ENCODE measurements at regions of chr22 and their contacts with region 1.

Region 1: DNA sequence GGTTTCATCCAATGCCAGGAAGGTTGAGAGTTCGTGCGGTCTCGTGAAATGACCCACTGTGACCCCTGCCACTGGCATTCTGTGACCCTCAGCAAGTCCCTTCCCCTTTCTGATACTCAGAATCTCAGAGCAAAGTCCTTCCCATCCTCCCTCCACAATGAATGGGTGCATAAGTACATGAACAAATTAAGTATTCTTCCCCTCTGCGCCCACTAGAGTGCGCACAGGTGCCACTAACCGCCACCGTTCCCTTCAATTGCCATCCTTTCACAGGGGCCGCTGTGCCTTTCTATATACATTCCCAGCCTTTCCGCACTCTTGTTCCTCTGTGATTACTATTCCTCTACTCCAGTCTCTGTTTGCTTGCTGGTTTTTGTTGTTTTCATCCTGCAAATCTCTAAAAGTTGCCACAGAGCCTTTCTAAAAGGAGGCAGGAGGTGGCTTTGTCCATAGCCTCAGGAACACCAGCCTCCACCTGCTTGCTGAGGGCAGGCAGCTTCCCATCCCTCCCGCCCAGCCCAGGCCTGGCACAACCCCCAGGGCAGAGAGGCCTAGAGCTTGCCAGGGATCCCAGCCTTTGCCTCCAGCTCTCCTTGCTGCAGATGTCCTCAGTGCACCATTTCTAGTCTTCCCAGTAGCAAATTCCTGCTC is 6.7 kb upstream of the AP1B1 start:
- DNase-seq: peak; percentile 79 to 84
- ATAC-seq: peak; percentile 86
- H3K4me3 ChIP-seq: no peak overlapping the region
- H3K27ac ChIP-seq: no peak overlapping the region
- H3K4me1 ChIP-seq: no peaks in the 10 kb centered on the region
- H3K27me3 ChIP-seq: no peaks in the 10 kb centered on the region

Region 2: DNA sequence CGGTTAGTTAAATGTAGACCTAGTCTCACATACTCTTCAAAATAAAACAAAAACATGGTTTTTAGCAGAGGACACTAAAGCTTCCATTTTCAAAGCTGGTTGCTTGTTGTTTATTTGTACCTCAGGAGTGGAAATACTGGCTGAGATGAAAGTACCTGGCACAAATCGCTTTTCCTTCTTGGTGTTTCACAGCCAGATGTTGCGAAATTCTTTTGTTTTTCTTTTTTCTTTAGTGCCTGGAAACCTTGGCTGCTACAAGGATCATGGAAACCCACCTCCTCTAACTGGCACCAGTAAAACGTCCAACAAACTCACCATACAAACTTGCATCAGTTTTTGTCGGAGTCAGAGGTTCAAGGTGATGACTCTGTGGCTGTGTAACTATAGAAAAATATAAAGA is 273.9 kb before region 1 on chr22:
- intact Hi-C with region 1: no loop called
- DNase-seq: no peak
- ATAC-seq: no peak
- H3K4me3 ChIP-seq: no peak overlapping the region
- H3K27ac ChIP-seq: no peak overlapping the region
- H3K4me1 ChIP-seq: no peaks in the 10 kb centered on the region
- H3K27me3 ChIP-seq: no peaks in the 10 kb centered on the region

Region 3: GRCh38 chr22:29330753-29331152 is 64.3 kb before region 1 on chr22:
- intact Hi-C with region 1: no loop called
- DNase-seq: peak; percentile 71 to 79
- ATAC-seq: no peak
- H3K4me3 ChIP-seq: no peak overlapping the region
- H3K27ac ChIP-seq: no peak overlapping the region
- H3K4me1 ChIP-seq: no peaks in the 10 kb centered on the region
- H3K27me3 ChIP-seq: no peaks in the 10 kb centered on the region

Region 4: DNA sequence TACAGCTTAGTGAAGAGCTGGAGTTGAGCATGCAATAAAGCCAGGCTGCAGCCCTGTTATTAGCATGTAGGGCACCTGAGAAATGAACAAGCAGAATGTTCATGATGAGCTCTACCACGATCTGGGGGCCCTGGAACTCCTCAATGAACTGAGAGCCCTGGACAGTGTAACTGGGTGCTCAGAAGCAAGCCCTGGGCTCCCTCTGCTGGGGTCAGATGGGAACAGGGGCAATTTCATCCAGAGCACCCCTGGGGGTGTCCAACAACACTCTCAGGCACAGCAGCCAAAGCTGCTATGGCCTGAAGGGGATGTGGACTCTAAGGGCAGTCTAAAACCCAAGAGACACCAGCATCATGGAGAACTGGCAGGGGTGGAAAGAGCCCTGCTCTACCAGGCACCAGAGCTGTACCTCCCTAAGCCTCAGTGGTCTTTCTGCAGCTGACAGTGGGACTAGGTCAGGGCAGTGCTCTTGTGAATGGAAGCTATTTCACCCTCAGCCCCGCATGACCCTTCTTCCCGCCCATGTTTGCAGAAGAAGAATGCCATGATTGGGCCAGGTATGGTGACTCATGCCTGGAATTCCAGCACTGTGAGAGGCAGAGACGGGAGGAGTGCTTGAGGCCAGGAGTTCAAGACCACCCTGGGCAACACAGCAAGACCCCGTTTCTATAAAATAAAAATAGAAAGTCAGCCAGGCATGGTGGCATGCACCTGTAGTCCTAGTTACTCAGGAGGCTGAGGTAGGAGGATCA is 129.6 kb after region 1 on chr22:
- intact Hi-C with region 1: loop called in 1 of 2 experiments (anchors 10 kb)
- DNase-seq: no peak
- ATAC-seq: no peak
- H3K4me3 ChIP-seq: no peak overlapping the region
- H3K27ac ChIP-seq: no peak overlapping the region
- H3K4me1 ChIP-seq: no peaks in the 10 kb centered on the region
- H3K27me3 ChIP-seq: no peaks in the 10 kb centered on the region

Measured in aorta (tissue), 5 donors.